ENCODE measurements at regions of chr10 and their contacts with region 1.

Region 1: DNA sequence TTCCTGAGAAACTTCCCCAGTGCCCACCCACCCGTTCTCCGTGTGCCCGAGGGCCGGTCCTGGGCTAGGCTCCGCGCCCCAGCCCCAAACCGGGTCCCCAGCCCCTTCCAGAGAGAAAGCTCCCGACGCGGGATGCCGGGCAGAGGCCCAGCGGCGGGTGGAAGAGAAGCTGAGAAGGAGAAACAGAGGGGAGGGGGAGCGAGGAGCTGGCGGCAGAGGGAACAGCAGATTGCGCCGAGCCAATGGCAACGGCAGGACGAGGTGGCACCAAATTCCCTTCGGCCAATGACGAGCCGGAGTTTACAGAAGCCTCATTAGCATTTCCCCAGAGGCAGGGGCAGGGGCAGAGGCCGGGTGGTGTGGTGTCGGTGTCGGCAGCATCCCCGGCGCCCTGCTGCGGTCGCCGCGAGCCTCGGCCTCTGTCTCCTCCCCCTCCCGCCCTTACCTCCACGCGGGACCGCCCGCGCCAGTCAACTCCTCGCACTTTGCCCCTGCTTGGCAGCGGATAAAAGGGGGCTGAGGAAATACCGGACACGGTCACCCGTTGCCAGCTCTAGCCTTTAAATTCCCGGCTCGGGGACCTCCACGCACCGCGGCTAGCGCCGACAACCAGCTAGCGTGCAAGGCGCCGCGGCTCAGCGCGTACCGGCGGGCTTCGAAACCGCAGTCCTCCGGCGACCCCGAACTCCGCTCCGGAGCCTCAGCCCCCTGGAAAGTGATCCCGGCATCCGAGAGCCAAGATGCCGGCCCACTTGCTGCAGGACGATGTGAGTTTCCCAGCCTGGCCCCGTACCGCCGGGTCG is at the start of gene SCD:
- DNase-seq: peak; percentile 94
- ATAC-seq: peak; percentile 92
- H3K4me3 Mint-ChIP-seq: peak within 1 kb of the TSS; percentile 88
- H3K27ac Mint-ChIP-seq: peak within 1 kb of the TSS; percentile 91
- H3K4me1 Mint-ChIP-seq: peaks cover 44% of the 10 kb centered on the region
- H3K27me3 Mint-ChIP-seq: no peaks in the 10 kb centered on the region
- total RNA-seq, gene SCD: 203 to 206 TPM

Region 2: GRCh38 chr10:100267237-100268104 is 79.5 kb before region 1 on chr10 and contains the start of gene CWF19L1:
- CTCF ChIA-PET with region 1: no interaction called
- POLR2A ChIA-PET with region 1: no interaction called
- intact Hi-C with region 1: loop called in 1 of 2 experiments (anchors 1 kb)
- DNase-seq: peak; percentile 86
- ATAC-seq: peak; percentile 92
- H3K4me3 Mint-ChIP-seq: peak within 1 kb of the TSS; percentile 97
- H3K27ac Mint-ChIP-seq: peak within 1 kb of the TSS; percentile 99
- H3K4me1 Mint-ChIP-seq: peaks cover 22% of the 10 kb centered on the region
- H3K27me3 Mint-ChIP-seq: no peaks in the 10 kb centered on the region
- total RNA-seq, gene CWF19L1: 43.4 to 47.5 TPM

Region 3: DNA sequence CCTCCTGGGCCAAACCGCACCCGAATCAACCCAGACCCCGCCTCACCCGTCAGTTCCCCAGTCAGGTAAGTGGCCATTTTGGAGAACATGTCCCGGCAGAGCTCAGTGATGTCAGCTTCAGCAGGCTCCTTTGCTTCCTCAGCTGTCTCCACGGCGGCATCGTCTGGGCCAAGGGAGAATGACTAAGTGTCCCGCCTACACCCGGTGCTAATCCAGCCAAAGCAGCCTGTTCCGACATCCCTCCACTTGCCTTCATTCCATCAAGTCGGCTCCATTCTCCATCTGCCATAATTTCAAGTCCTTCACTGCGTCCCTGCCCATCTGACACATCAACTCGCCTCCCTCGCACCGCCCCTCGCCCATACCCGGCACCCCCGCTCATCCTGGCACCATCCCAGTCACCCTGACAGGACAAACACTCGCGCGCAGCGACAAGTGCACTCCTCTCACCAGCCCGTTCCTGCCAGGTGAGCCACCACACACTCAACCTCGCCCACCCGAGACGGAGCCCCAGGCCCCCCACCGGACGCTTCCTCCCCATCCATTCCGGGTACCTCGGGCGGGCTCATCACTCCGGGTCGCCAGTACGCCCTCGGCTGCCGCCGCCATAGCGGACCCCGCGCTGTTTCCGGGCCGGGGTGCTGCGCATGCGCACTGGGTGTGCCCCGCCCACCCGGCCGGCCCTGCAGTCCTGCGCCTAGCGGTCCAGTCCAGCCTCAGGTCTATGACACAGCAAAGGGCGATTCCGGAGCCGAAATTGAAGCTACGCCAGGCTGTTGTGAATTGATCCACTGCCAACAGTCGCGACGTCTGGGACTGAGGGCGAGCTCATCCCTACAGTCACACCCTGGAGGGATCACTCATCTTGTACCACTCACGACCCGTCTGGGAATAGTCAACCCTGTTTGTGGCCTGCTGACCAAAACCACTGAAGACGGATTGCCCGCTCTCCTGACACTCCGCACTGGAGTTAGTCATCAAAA is 60.6 kb before region 1 on chr10 and contains the start of gene BLOC1S2:
- CTCF ChIA-PET with region 1: interaction called, 3 read pairs
- POLR2A ChIA-PET with region 1: no interaction called
- intact Hi-C with region 1: loop called (anchors 1 to 2 kb)
- DNase-seq: peak; percentile 91
- ATAC-seq: peak; percentile 89
- H3K4me3 Mint-ChIP-seq: peak within 1 kb of the TSS; percentile 100
- H3K27ac Mint-ChIP-seq: peak within 1 kb of the TSS; percentile 100
- H3K4me1 Mint-ChIP-seq: peaks cover 24% of the 10 kb centered on the region
- H3K27me3 Mint-ChIP-seq: no peaks in the 10 kb centered on the region
- total RNA-seq, gene BLOC1S2: 45.0 to 45.7 TPM

Region 4: DNA sequence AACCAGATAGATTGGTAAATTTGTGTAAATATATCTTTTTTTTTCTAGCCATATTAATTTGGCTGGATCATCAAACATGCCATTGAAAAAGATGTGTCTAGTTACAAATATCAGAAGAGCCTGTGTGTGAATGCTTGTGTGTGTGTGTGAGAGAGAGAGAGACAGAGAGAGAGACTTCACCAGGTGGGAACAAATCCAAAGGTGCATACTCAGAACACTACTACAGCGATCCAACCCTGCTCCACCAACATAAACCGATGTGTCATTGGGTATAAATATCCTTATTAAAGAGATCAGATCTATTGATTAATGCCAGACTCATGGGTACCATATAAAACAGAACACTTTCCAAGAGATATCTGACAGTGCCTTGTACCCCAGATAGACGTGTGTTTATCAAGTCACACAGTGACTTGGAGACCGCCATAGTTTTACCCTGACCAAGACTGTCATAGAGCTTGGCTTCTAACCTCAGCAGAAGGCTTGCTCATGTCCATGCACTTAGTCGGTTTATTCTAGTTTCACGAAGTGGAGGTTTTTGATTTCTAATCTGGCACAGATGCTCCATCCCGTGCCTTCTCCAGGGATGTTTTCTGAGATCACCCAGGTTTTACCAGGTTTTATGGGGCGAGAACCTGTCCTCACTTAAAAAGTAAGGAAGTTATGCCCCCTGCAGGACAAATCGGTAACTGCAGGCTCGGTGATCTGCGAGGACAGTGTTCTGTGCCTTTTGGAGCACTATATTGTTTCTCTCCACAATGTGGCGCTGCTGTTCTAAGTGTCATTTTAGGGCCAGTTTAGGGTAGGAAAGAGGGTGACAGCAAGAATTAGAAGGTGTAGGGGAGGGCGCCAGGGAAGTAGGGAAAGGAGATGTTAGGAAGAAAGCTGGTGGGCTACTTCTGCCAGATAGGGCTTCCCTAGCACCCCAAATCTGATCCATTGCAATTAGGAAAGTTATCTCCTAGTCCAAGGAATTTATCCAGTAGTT is 86.6 kb after region 1 on chr10:
- CTCF ChIA-PET with region 1: interaction called, 236 read pairs
- POLR2A ChIA-PET with region 1: no interaction called
- intact Hi-C with region 1: loop called (anchors 1 kb)
- DNase-seq: peak; percentile 98
- ATAC-seq: peak; percentile 98
- H3K4me3 Mint-ChIP-seq: peak overlapping the region; percentile 7
- H3K27ac Mint-ChIP-seq: no peak overlapping the region
- H3K4me1 Mint-ChIP-seq: peaks cover 5% of the 10 kb centered on the region
- H3K27me3 Mint-ChIP-seq: peaks cover 2% of the 10 kb centered on the region

Region 5: DNA sequence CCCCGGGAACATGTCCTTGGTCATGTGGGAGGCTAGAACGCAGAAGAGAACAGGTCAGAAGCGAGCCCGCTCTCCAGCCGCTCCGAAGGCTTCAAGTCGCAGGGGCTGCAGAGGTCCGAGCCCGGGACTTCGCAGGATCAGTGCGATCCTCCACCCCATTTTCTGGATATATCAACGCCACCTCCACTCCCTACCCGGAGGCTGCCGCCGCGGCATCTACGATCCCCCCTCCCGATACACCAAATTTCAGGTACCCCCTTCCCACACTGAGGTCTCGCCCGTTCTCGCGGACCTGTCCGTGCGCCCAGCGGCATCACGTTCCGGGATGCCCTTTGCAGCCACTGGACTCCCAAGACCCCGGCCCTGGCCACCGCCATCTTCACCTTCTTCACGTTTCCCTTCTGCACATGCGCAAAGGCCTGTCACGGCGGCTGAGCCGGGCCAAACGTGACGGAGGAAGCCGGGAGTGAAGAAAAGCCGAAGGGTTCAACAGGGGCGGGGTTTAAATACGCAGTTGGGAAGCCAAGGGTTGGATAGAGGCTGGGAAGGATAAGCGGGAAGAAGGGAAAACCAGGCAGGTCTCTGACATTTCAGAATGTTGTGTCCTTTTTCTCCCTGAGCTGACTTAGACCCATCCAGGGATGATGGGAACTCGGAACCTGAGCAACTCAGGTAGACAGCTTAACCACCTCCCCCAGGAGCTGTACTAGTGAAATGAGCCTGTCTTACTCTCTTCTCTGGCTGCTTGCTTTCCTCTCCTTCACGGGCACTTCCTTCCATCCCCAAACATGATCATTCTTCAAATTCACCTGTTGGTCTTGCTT is 182.7 kb after region 1 on chr10 and contains the start of gene NDUFB8:
- CTCF ChIA-PET with region 1: interaction called, 3 read pairs
- POLR2A ChIA-PET with region 1: no interaction called
- intact Hi-C with region 1: loop called in 1 of 2 experiments (anchors 2 kb)
- DNase-seq: peak; percentile 93
- ATAC-seq: peak; percentile 72
- H3K4me3 Mint-ChIP-seq: peak within 1 kb of the TSS; percentile 88
- H3K27ac Mint-ChIP-seq: peak within 1 kb of the TSS; percentile 99
- H3K4me1 Mint-ChIP-seq: peaks cover 37% of the 10 kb centered on the region
- H3K27me3 Mint-ChIP-seq: no peaks in the 10 kb centered on the region
- total RNA-seq, gene NDUFB8: 291 to 375 TPM